HEK293 (cell line): ENCODE measurements at regions of chr10 and their contacts with region 1.

Region 1: GRCh38 chr10:13526951-13527863 is 1.6 kb downstream of the BEND7 start:
- H3K4me3 ChIP-seq: peak overlapping the region; percentile 57
- H3K27ac ChIP-seq: no peak overlapping the region
- H3K4me1 ChIP-seq: peaks cover 2% of the 10 kb centered on the region; the same call in 1 of the 2 replicates
- CTCF ChIP-seq: no peak

Region 2: DNA sequence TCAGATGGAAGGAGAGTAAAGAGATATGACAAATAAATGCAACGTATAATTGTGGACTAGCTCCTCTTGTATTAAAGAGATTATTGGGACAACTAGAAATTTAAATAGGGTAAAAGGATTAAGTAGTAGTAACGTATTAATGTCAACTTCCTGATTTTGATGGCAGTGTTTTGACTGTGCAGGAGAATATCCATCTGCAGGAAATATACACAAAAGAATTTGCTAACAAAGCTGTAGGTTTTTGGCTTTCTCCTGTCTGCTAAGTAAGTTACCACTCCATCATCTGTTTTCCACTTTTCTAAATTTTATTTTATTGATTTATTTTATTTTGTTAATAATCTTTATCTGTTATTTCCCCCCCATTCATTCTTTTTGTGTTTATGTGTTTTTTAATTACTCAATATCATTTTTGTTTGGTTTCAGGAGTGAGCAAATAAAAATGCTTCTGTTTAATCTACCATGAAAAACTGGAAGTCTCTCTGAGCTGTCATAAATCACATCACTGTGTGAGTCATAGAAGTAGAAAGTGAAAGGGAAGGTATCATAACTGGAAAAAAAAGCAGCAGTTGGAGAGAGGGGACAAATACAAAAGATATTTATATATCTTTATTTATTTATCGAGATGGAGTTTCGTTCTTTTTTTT is 29.6 kb after region 1 on chr10:
- CTCF ChIA-PET with region 1: interaction called, 5 read pairs
- POLR2A ChIA-PET with region 1: interaction called, 10 read pairs
- H3K4me3 ChIP-seq: no peak overlapping the region
- H3K27ac ChIP-seq: no peak overlapping the region
- H3K4me1 ChIP-seq: no peaks in the 10 kb centered on the region; the same call in 1 of the 2 replicates
- CTCF ChIP-seq: no peak

Region 3: GRCh38 chr10:13567030-13567429 is 39.8 kb after region 1 on chr10:
- CTCF ChIA-PET with region 1: no interaction called
- POLR2A ChIA-PET with region 1: no interaction called
- H3K4me3 ChIP-seq: no peak overlapping the region
- H3K27ac ChIP-seq: no peak overlapping the region
- H3K4me1 ChIP-seq: no peaks in the 10 kb centered on the region
- CTCF ChIP-seq: no peak